CD8-positive, alpha-beta T cell (primary cell): ENCODE measurements at regions of chr12 and their contacts with region 1.

Region 1: GRCh38 chr12:57846577-57847319 is at the start of gene CTDSP2:
- DNase-seq: peak; percentile 52 to 95 (median 88)
- ATAC-seq: peak; percentile 39
- H3K4me3 ChIP-seq: peak within 1 kb of the TSS; percentile 95 to 100
- H3K4me3 Mint-ChIP-seq: peak within 1 kb of the TSS; percentile 87
- H3K27ac ChIP-seq: peak within 1 kb of the TSS; percentile 81
- H3K27ac Mint-ChIP-seq: peak within 1 kb of the TSS; percentile 90
- H3K4me1 ChIP-seq: peaks cover 36% of the 10 kb centered on the region
- H3K4me1 Mint-ChIP-seq: peaks cover 45% of the 10 kb centered on the region
- H3K27me3 ChIP-seq: no peaks in the 10 kb centered on the region
- H3K27me3 Mint-ChIP-seq: peaks cover 4% of the 10 kb centered on the region
- CTCF ChIP-seq: no peak
- total RNA-seq, gene CTDSP2: 68.1 to 70.5 TPM

Region 2: DNA sequence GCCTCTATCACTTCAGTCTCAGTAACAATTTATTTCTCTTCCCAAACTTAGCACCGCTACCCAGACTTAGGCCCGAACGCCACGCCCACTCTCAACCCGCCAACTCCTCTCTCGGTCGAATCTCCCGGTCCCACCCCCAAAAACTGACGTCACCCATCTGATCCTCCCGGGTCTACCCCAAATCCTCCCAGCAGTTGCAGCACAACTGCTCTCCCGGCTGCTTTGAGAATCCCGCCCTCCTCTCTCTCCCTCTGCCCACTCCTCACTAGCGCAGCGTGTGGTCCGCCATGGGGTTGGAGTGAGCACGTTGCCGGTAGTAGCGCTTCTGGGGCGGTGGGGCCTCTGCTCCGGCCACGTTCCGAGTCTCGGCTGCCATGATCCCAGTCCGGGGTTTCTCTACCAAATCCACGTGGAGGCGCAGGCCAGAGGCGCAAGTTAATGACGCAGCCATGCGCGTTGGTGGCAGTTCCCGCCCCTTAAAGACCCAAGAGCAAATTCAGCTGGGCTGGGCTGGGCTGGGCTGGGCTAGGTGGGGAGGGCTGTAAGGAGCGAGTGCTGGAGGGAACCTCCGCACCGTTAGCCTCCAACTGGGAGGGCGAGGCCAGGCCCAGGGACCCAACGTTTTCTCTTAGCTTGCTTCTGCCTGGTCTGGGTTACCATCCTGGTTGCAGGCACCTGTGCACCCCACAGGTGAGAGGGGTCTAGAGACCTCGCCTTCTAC is 74.9 kb before region 1 on chr12 and contains the start of gene METTL1:
- CTCF ChIA-PET with region 1: interaction called, 3 read pairs
- POLR2A ChIA-PET with region 1: no interaction called
- intact Hi-C with region 1: loop called in 1 of 2 experiments (anchors 5 kb)
- DNase-seq: peak; percentile 72 to 95 (median 88)
- ATAC-seq: peak; percentile 90
- H3K4me3 ChIP-seq: peak within 1 kb of the TSS; percentile 85 to 87
- H3K4me3 Mint-ChIP-seq: peak within 1 kb of the TSS; percentile 96
- H3K27ac ChIP-seq: peak within 1 kb of the TSS; percentile 81 to 82
- H3K27ac Mint-ChIP-seq: peak within 1 kb of the TSS; percentile 97
- H3K4me1 ChIP-seq: peaks cover 18% of the 10 kb centered on the region
- H3K4me1 Mint-ChIP-seq: peaks cover 17% of the 10 kb centered on the region
- H3K27me3 ChIP-seq: no peaks in the 10 kb centered on the region
- H3K27me3 Mint-ChIP-seq: no peaks in the 10 kb centered on the region
- CTCF ChIP-seq: no peak
- total RNA-seq, gene METTL1: 14.0 to 20.0 TPM

Region 3: DNA sequence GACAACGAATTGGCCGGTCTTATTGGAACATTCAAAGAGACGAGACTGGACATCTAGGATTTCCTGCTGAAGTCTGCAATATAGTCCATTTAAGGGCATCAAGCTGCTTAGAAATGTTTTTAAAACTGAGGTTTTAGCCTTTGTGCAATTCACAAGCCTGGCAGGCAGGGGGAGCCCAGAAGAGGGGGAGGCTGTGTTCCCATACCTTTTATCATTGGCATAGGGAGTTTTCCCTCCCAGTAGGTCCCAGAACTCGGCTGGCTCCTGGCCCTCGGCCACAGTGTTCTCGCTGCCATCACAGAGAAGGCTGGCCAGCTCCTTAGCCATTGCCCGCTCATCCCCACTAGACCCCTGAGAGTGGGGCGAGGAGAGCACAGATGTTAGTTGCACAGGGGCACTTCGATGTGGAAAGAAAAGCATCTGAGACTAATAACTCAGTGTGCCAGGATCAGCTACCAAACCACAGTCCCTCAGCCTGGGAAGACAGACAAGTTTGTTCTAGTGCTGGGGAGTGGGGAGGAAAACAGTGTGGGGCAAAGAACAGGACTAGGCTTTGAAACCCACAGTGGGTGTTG is 43.3 kb before region 1 on chr12:
- CTCF ChIA-PET with region 1: interaction called, 10 read pairs
- POLR2A ChIA-PET with region 1: no interaction called
- intact Hi-C with region 1: no loop called
- DNase-seq: peak in 6 of 9 experiments; percentile 11 to 48 (median 40)
- ATAC-seq: peak; percentile 55
- H3K4me3 ChIP-seq: no peak overlapping the region
- H3K4me3 Mint-ChIP-seq: no peak overlapping the region
- H3K27ac ChIP-seq: no peak overlapping the region
- H3K27ac Mint-ChIP-seq: no peak overlapping the region
- H3K4me1 ChIP-seq: no peaks in the 10 kb centered on the region
- H3K4me1 Mint-ChIP-seq: no peaks in the 10 kb centered on the region
- H3K27me3 ChIP-seq: no peaks in the 10 kb centered on the region
- H3K27me3 Mint-ChIP-seq: no peaks in the 10 kb centered on the region
- CTCF ChIP-seq: peak; percentile 71

Region 4: DNA sequence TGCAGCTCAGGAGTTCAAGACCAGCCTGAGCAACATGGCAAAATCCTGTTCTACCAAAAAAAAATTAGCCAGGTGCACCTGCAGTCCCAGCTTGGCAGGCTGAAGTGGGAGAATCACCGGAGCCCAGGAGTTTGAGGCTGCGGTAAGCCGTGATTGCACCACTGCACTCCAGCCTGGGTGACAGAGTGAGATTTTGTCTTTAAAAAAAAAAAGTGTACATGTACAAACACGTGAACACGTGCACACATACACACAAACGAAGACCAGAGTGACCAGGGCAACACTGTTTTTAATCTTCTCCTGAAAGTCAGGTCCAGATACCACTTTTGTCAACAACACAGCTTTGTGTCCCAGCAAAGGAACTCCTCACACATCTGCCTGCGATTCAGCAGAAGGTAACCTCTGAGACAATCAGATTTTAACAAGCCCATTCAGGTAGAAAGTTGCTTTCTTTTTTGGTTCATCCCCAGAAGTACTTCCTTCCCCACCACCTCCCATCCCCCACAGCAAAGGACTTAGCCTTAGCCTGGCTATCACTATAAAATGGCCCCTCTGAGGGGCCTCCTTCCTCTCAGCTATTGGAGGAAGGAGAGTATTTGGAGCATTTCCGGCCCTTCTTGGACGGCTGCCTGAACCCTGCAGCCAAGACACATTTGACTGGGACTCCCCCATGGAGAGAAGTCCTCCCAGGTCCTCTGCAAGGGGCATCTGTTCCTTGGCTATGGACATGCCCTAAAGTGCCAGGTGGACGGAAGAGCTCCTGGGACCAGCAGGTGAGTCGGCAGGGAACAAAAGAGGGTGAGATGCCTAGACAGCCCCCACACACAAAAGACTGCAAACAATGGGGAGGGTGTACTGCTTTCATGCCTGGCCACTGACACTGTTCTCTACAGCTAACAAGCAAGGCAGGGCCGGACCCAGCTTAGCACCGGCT is 10.0 kb before region 1 on chr12:
- CTCF ChIA-PET with region 1: interaction called, 17 read pairs
- POLR2A ChIA-PET with region 1: interaction called, 16 read pairs
- intact Hi-C with region 1: loop called (anchors 1 to 2 kb)
- DNase-seq: peak in 5 of 9 experiments; percentile 42 to 73 (median 55)
- ATAC-seq: peak; percentile 26
- H3K4me3 ChIP-seq: peak overlapping the region in 1 of 2 experiments; percentile 32
- H3K4me3 Mint-ChIP-seq: peak overlapping the region; percentile 63
- H3K27ac ChIP-seq: peak overlapping the region; percentile 37 to 64
- H3K27ac Mint-ChIP-seq: peak overlapping the region; percentile 94
- H3K4me1 ChIP-seq: peaks cover 98% of the 10 kb centered on the region
- H3K4me1 Mint-ChIP-seq: peaks cover 93% of the 10 kb centered on the region
- H3K27me3 ChIP-seq: no peaks in the 10 kb centered on the region
- H3K27me3 Mint-ChIP-seq: no peaks in the 10 kb centered on the region
- CTCF ChIP-seq: no peak

Region 5: DNA sequence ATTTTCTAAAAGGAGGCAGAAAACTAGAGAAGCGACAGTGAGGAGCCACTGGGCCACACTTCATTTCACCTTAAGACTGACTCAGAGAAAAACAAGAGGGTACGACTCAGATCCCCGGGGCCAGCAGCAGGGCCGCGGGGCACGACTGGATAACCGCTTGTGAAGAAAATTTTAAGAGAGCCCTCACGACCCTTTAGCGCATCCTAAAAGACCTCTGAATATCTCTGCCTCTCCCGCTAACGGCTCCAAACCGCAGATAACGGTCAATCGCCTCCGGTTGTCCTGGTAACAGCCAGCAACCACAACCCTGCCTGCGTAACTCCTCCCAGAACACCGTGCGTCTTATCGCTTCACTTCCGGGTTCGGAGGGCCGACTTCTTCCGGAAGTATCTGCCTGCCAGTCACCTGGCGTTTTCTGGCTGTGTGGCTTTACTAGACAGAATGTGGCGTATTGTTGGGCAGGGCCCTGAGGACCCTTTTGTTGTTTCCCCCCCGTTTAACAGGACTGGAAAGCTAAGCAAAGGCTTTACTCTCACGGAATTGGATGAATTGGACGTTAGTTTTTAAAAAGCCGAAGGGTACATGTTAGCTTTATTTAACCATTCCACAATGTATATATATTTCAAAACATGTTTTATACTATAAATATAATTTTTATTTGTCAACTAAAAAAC is 89.2 kb after region 1 on chr12:
- CTCF ChIA-PET with region 1: interaction called, 3 read pairs
- POLR2A ChIA-PET with region 1: interaction called, 4 read pairs
- intact Hi-C with region 1: loop called (anchors 1 to 2 kb)
- DNase-seq: peak; percentile 81 to 98 (median 90)
- ATAC-seq: peak; percentile 90
- H3K4me3 ChIP-seq: peak overlapping the region; percentile 49 to 61
- H3K4me3 Mint-ChIP-seq: peak overlapping the region; percentile 99
- H3K27ac ChIP-seq: peak overlapping the region; percentile 91 to 93
- H3K27ac Mint-ChIP-seq: peak overlapping the region; percentile 100
- H3K4me1 ChIP-seq: peaks cover 23% of the 10 kb centered on the region
- H3K4me1 Mint-ChIP-seq: peaks cover 40% of the 10 kb centered on the region
- H3K27me3 ChIP-seq: no peaks in the 10 kb centered on the region
- H3K27me3 Mint-ChIP-seq: no peaks in the 10 kb centered on the region
- CTCF ChIP-seq: no peak